Posterior vena cava (tissue), 2 donors: ENCODE measurements at regions of chr5 and their contacts with region 1.

Region 1: GRCh38 chr5:131810510-131811249 is 13.9 kb upstream of the FNIP1 start:
- DNase-seq: no peak

Region 2: GRCh38 chr5:131745703-131746102 is 65.0 kb before region 1 on chr5:
- intact Hi-C with region 1: loop called in 1 of 2 experiments (anchors 2 kb)
- DNase-seq: no peak

Region 3: DNA sequence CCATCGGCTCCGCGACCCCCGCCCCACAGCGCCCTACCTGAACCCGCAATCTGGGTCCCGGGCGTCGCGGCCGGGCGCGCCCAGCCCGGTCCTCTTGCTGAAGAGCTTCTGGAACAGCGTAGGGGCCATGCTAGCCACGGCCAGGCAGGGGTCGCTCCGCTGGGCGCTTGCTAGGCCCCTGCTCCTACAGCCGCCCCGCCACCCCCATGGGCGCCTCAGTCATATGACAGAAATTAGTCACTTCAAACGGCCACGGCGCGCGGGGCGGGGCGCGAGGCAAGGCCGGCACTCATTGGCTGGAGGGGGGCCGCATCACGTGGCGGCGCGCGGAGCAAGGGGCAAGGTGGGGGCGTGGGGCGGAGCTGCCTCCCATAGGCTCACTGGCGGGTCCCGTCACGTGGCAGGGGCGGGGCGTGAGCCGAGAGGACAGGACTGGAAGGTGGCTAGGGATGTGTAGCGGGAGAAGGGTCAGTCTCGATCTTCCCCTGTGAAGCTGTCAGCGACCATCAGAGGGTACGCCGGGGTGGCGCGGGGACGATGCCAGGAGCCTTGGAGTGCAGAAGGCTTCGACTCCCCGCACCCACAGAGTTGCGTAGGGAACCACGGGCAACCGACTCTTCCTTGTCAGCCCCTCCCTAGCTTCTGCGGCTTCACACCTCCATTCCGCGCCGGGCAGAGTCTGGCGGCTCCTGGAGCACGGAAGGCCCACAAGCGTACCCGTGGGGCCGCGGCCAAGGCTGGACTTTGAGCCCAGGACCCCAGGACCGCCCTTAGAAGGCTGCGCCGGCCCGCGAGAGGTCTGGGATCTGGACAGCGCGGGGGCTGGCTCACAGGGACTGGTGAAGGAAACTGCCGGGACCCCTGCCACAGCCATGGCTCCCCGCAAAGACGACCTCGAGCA is 13.6 kb before region 1 on chr5 and contains the start of gene FNIP1:
- intact Hi-C with region 1: no loop called
- DNase-seq: peak; percentile 100
- total RNA-seq, gene FNIP1: 34.1 to 39.5 TPM